ENCODE measurements at regions of chr12 and their contacts with region 1.

Region 1: GRCh38 chr12:15910864-15911721 is at the start of gene DERA:
- DNase-seq: peak; percentile 17
- H3K4me3 ChIP-seq: peak within 1 kb of the TSS; percentile 86
- H3K27me3 ChIP-seq: no peaks in the 10 kb centered on the region
- CTCF ChIP-seq: no peak
- polyA plus RNA-seq, gene DERA: 22.6 and 31.1 TPM in 2 replicates

Region 2: DNA sequence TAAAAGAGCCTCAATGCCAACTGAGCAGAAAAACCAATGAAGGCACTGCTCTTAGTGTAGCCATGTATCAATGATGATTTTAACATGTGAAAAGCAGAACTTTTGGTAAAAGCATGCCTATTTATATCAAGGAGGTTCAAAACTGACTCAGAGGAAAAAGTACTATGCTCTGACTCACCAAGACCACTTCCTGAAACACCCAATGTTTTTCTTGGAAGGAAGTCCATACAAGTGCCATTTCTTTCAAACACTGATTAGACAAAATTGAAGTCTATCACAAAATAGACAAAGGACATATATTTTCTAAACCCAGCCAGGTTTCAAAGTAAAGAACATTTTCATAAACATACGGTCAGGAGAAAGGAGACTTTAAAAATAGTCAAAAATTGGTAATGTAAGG is 210.5 kb before region 1 on chr12:
- CTCF ChIA-PET with region 1: no interaction called
- POLR2A ChIA-PET with region 1: no interaction called
- DNase-seq: peak; percentile 75
- H3K4me3 ChIP-seq: no peak overlapping the region
- H3K27me3 ChIP-seq: no peaks in the 10 kb centered on the region
- CTCF ChIP-seq: no peak

Region 3: DNA sequence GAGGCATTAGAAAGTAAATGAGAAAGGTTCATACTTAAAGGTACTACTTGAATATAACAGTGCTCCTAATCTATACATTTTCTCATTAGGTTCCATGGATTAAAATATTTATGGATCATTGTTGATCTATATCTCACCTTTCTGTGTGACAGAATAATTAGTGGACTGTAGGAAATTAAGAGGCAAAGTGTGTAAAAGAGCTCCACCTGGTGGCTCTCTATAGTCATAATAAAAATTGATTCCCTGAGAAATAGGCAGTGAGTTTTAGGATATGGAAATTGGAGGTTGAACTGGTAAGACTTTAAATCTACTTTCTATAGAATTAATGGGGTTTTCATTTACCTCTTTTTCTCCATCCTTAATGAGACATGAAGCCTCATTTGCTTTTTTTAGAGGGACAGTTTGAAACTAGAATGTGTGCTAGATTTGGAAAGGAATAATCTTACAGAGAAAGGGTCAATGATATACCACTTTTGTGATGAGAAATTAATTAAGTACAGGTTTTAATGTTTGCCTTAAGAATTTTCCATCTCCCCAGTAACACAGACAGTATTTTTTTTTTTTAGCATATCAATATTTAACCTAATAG is 11.7 kb before region 1 on chr12:
- CTCF ChIA-PET with region 1: interaction called, 21 read pairs
- POLR2A ChIA-PET with region 1: no interaction called
- DNase-seq: no peak
- H3K4me3 ChIP-seq: no peak overlapping the region
- H3K27me3 ChIP-seq: no peaks in the 10 kb centered on the region
- CTCF ChIP-seq: peak; percentile 55

Region 4: GRCh38 chr12:15928346-15928745 is 17.3 kb after region 1 on chr12:
- CTCF ChIA-PET with region 1: interaction called, 11 read pairs
- POLR2A ChIA-PET with region 1: interaction called, 20 read pairs
- DNase-seq: peak; percentile 37
- H3K4me3 ChIP-seq: no peak overlapping the region
- H3K27me3 ChIP-seq: no peaks in the 10 kb centered on the region
- CTCF ChIP-seq: no peak